ENCODE measurements at regions of chrX and their contacts with region 1.

Region 1: GRCh38 chrX:104136241-104137019 is 20.4 kb downstream of the SLC25A53 start:
- DNase-seq: peak; percentile 33 to 84
- ATAC-seq: peak; percentile 74 to 82 (median 78)
- H3K4me3 ChIP-seq: no peak overlapping the region
- H3K4me3 Mint-ChIP-seq: no peak overlapping the region
- H3K27ac ChIP-seq: no peak overlapping the region
- H3K27ac Mint-ChIP-seq: no peak overlapping the region
- H3K4me1 ChIP-seq: peaks cover 20% of the 10 kb centered on the region
- H3K4me1 Mint-ChIP-seq: peaks cover 28 to 40% of the 10 kb centered on the region in 2 donors
- H3K27me3 ChIP-seq: no peaks in the 10 kb centered on the region
- H3K27me3 Mint-ChIP-seq: no peaks in the 10 kb centered on the region
- CTCF ChIP-seq: peak; percentile 71

Region 2: GRCh38 chrX:104045642-104046041 is 90.8 kb before region 1 on chrX:
- intact Hi-C with region 1: no loop called
- DNase-seq: no peak
- ATAC-seq: no peak
- H3K4me3 ChIP-seq: no peak overlapping the region
- H3K4me3 Mint-ChIP-seq: no peak overlapping the region
- H3K27ac ChIP-seq: no peak overlapping the region
- H3K27ac Mint-ChIP-seq: no peak overlapping the region
- H3K4me1 ChIP-seq: no peaks in the 10 kb centered on the region
- H3K4me1 Mint-ChIP-seq: no peaks in the 10 kb centered on the region
- H3K27me3 ChIP-seq: no peaks in the 10 kb centered on the region
- H3K27me3 Mint-ChIP-seq: peaks cover 6 to 38% of the 10 kb centered on the region in 2 donors
- CTCF ChIP-seq: no peak

Region 3: DNA sequence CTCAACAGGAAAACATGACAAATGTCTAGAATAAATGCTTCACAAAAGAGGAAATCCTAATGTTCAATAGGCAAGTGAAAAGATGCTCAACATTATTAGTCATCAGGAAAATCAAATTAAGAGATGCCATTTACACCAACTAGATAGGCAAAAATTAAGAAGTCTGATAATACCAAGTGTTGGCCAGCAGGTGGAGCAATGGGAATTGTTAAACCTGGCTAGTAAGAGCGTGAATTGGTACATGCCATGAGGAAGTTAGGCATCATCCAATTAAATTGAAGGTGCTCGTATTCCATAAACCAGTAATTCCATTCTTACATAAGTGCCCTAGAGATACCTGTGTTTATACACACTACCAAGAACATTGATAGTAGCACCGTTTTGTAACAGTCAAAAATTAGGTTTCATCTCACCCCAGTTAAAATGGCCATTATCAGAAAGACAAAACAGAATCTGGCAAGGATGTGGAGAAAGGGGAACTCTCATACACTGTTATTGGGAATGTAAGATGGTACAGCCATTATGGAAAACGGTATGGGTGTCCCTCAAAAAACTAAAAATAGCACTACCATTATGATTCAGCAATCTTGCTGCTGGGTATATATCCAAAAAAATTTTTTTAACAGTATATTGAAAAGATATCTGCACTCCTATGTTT is 38.1 kb before region 1 on chrX:
- intact Hi-C with region 1: loop called (anchors 1 kb)
- DNase-seq: peak in 1 of 2 donors; percentile 87
- ATAC-seq: peak; percentile 67 to 88 (median 87)
- H3K4me3 ChIP-seq: no peak overlapping the region
- H3K4me3 Mint-ChIP-seq: no peak overlapping the region
- H3K27ac ChIP-seq: no peak overlapping the region
- H3K27ac Mint-ChIP-seq: peak overlapping the region in 1 of 2 donors; percentile 76
- H3K4me1 ChIP-seq: no peaks in the 10 kb centered on the region
- H3K4me1 Mint-ChIP-seq: peaks cover 0 to 4% of the 10 kb centered on the region in 2 donors
- H3K27me3 ChIP-seq: no peaks in the 10 kb centered on the region
- H3K27me3 Mint-ChIP-seq: peaks cover 0 to 15% of the 10 kb centered on the region in 2 donors
- CTCF ChIP-seq: peak; percentile 42